ENCODE measurements at regions of chr11 and their contacts with region 1.

Region 1: DNA sequence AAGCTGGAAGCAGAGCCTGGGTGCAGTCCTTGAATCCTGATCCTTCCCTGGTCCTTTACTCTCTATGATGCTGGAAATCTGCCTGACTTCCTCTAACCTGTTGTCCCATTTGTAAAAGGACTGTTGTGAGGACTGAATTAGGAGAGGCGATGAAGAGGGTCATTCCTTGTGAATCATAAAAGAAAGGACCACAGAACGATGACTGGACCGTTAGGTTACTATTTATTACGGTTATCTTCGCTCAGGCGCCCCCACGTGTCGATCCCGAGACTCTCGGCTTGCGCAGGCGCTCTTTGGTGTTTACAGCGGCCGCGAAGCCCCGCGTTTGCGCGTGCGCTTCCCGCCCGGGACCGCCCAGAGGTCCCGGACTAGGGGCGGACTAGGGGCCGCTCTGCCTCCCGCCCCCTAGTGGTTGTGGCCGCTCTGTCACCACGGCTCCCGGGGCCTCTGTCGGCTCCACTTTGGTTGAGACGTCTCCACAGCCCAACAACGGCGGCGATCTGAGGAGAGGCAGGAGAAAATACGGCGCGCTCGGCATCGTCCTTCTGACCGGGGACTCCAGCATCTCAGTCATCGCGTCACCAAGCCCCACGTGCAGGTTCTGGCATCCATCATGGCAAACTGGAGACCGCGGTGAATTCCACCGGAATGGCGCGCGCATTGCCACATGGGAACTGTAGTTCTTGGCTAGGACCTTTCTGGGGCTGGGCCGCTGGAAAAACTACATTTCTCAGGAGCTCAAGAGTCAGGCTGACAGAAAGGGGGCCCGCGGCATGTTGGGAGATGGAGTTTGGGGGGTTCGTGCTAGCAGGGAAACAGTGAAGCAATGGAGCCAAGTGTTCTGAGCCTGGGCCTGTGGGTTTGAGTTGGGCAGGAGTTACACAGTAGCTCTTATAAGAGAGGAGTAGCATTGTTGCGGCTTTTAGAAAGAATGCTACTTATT is at the start of gene STARD10:
- DNase-seq: peak; percentile 88 to 97 (median 95)
- ATAC-seq: peak; percentile 92
- H3K4me3 ChIP-seq: peak within 1 kb of the TSS; percentile 62 to 90
- H3K4me3 Mint-ChIP-seq: peak within 1 kb of the TSS; percentile 99
- H3K27ac ChIP-seq: peak within 1 kb of the TSS; percentile 87 to 92
- H3K27ac Mint-ChIP-seq: peak within 1 kb of the TSS; percentile 100
- H3K4me1 ChIP-seq: peaks cover 20% of the 10 kb centered on the region
- H3K4me1 Mint-ChIP-seq: peaks cover 25% of the 10 kb centered on the region
- H3K27me3 ChIP-seq: no peaks in the 10 kb centered on the region
- H3K27me3 Mint-ChIP-seq: no peaks in the 10 kb centered on the region
- CTCF ChIP-seq: peak; percentile 91
- total RNA-seq, gene STARD10: 22.1 to 25.1 TPM

Region 2: DNA sequence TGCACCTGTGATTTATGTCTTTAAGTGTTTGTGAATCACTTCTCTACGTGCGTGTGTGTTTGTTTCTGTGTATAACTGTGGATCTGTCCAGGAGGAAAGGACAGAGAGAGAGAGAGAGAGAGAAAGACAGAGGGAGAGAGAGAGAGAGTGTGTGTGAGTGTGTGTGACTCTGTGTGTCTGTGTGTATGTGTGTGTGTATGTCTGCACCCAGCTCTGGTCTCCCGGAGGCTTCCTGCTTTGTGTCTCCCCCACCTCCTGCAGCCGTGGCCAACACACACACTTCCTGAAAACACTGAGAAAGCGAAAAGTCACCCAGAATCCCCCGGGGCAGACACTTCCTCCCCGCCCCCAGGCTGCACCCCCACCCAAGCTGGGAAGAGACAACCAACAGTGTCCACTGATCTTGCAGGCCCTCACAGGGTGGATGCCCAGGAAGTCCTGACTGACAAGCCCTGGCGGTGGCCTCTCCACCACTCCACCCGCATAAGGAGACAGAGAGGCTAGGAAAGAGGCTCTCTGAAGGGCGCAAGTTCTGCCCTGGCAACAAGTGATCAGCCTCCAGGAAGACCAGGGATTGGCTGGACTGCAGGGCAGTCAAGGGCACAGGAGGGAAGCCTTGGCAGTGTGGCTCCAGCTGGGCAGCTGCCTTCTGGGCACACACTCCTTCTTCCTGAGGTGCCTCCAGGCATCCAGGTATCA is 71.5 kb before region 1 on chr11:
- CTCF ChIA-PET with region 1: interaction called, 157 read pairs
- POLR2A ChIA-PET with region 1: interaction called, 18 read pairs
- intact Hi-C with region 1: loop called (anchors 1 kb)
- DNase-seq: peak; percentile 72 to 94 (median 87)
- ATAC-seq: peak; percentile 81
- H3K4me3 ChIP-seq: peak overlapping the region; percentile 77 to 89
- H3K4me3 Mint-ChIP-seq: peak overlapping the region; percentile 98
- H3K27ac ChIP-seq: peak overlapping the region; percentile 80 to 87
- H3K27ac Mint-ChIP-seq: peak overlapping the region; percentile 98
- H3K4me1 ChIP-seq: peaks cover 64% of the 10 kb centered on the region
- H3K4me1 Mint-ChIP-seq: peaks cover 65% of the 10 kb centered on the region
- H3K27me3 ChIP-seq: no peaks in the 10 kb centered on the region
- H3K27me3 Mint-ChIP-seq: no peaks in the 10 kb centered on the region
- CTCF ChIP-seq: no peak

Region 3: DNA sequence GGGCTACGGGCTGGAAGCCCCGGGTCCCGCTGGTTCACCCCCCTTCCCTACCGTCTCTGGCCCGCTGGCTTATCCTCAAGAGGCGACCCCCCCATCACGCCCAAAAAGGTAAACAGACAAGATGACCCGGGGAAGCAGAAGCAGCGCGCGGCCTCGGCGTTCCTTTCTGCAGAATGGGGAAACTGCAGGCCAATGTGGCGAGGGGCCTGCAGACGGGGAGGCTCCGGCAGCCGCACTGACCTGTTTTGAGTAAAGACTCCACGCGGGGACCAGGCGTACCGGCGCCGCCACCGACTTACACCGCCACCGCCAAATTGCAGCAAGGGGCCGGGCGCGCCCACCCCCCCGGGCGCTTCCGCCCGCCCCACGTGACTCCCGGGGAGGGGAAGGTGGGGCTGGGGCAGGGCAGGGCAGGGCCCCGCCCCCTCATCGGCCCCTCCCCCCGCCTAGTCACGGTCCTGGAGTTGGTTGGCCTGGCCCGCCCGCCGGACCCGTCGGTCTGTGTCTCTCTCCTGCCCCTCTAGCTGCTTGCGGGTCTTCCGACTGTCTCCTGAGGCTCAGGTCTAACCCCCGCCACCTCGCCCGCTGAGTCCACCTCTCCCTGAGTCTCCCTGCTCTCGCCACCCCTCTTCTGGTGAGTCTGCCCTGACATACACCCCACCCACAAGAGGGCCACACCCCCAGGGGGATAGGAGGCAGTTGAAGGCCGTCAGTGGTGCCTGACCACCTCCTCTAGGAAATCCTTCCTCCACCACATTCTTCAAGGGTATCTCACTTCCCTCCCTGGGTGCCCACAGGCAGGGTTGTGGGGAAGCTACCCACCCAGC is 41.4 kb before region 1 on chr11 and contains the start of gene ARAP1:
- CTCF ChIA-PET with region 1: interaction called, 8 read pairs
- POLR2A ChIA-PET with region 1: interaction called, 6 read pairs
- intact Hi-C with region 1: loop called (anchors 1 kb)
- DNase-seq: peak; percentile 53 to 91 (median 80)
- ATAC-seq: peak; percentile 88
- H3K4me3 ChIP-seq: peak within 1 kb of the TSS; percentile 92 to 95
- H3K4me3 Mint-ChIP-seq: peak within 1 kb of the TSS; percentile 95
- H3K27ac ChIP-seq: peak within 1 kb of the TSS; percentile 68 to 70
- H3K27ac Mint-ChIP-seq: peak within 1 kb of the TSS; percentile 94
- H3K4me1 ChIP-seq: peaks cover 40% of the 10 kb centered on the region
- H3K4me1 Mint-ChIP-seq: peaks cover 45% of the 10 kb centered on the region
- H3K27me3 ChIP-seq: no peaks in the 10 kb centered on the region
- H3K27me3 Mint-ChIP-seq: no peaks in the 10 kb centered on the region
- CTCF ChIP-seq: no peak
- total RNA-seq, gene ARAP1: 93.5 to 95.2 TPM

Region 4: GRCh38 chr11:72814286-72815109 is 20.8 kb after region 1 on chr11 and contains the start of gene ATG16L2:
- CTCF ChIA-PET with region 1: interaction called, 16 read pairs
- POLR2A ChIA-PET with region 1: interaction called, 23 read pairs
- intact Hi-C with region 1: loop called (anchors 1 kb)
- DNase-seq: peak; percentile 83 to 96 (median 88)
- ATAC-seq: peak; percentile 78
- H3K4me3 ChIP-seq: peak within 1 kb of the TSS; percentile 97 to 98
- H3K4me3 Mint-ChIP-seq: peak within 1 kb of the TSS; percentile 99
- H3K27ac ChIP-seq: peak within 1 kb of the TSS; percentile 99 to 100
- H3K27ac Mint-ChIP-seq: peak within 1 kb of the TSS; percentile 99
- H3K4me1 ChIP-seq: peaks cover 26% of the 10 kb centered on the region
- H3K4me1 Mint-ChIP-seq: peaks cover 48% of the 10 kb centered on the region
- H3K27me3 ChIP-seq: no peaks in the 10 kb centered on the region
- H3K27me3 Mint-ChIP-seq: no peaks in the 10 kb centered on the region
- CTCF ChIP-seq: peak; percentile 20
- total RNA-seq, gene ATG16L2: 45.7 to 52.8 TPM

Region 5: GRCh38 chr11:72848846-72849466 is 55.3 kb after region 1 on chr11:
- CTCF ChIA-PET with region 1: interaction called, 4 read pairs
- POLR2A ChIA-PET with region 1: no interaction called
- intact Hi-C with region 1: loop called in 1 of 2 experiments (anchors 2 kb)
- DNase-seq: peak in 5 of 9 experiments; percentile 29 to 67 (median 46)
- ATAC-seq: peak; percentile 71
- H3K4me3 ChIP-seq: no peak overlapping the region
- H3K4me3 Mint-ChIP-seq: no peak overlapping the region
- H3K27ac ChIP-seq: no peak overlapping the region
- H3K27ac Mint-ChIP-seq: no peak overlapping the region
- H3K4me1 ChIP-seq: no peaks in the 10 kb centered on the region
- H3K4me1 Mint-ChIP-seq: peaks cover 5% of the 10 kb centered on the region
- H3K27me3 ChIP-seq: no peaks in the 10 kb centered on the region
- H3K27me3 Mint-ChIP-seq: no peaks in the 10 kb centered on the region
- CTCF ChIP-seq: peak; percentile 61

Region 6: DNA sequence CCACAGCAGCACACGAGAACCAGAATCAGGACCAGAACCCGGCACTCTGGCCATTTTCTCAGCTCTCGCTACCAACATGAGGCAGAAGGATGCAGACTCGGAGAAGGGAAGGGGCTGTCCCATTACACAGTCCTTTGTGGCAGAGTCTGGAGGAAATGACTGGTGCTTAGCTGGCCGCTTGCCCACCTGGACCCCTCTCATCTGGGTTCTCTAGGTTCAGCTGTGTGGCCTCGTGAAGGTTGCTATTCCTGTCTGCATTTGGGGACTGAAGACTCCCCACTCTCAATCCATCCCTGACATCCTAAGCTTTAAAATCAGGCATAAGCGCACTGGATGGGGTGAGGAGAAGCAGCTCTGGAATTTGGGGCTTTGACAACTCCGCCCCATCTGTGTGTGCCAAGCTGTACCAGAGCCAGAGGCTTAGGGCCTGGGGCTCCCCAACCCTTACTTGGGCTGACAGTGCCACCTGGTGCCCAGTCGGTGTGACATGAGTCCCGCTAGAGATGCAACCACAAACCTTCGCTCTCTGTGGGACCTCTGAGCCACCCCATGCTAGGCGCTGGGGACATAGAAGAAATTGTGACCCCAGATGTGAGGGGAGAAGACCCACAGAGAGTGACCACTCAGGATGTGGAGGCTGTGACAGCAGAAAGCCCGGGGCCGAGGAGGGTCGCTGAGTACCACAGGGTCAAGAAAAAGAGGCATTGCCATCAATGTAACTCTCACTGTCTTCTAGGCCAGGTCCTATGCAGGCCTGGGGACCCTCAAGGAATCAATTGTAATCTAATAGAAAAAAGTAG is 384.3 kb after region 1 on chr11:
- CTCF ChIA-PET with region 1: interaction called, 5 read pairs
- POLR2A ChIA-PET with region 1: no interaction called
- intact Hi-C with region 1: loop called in 1 of 2 experiments (anchors 1 kb)
- DNase-seq: peak; percentile 65 to 87 (median 80)
- ATAC-seq: peak; percentile 100
- H3K4me3 ChIP-seq: no peak overlapping the region
- H3K4me3 Mint-ChIP-seq: no peak overlapping the region
- H3K27ac ChIP-seq: no peak overlapping the region
- H3K27ac Mint-ChIP-seq: no peak overlapping the region
- H3K4me1 ChIP-seq: no peaks in the 10 kb centered on the region
- H3K4me1 Mint-ChIP-seq: peaks cover 3% of the 10 kb centered on the region
- H3K27me3 ChIP-seq: no peaks in the 10 kb centered on the region
- H3K27me3 Mint-ChIP-seq: no peaks in the 10 kb centered on the region
- CTCF ChIP-seq: peak; percentile 80